ENCODE measurements at regions of chr5 and their contacts with region 1.

Region 1: GRCh38 chr5:160439205-160439600 is 17.5 kb downstream of the PTTG1 start:
- DNase-seq: peak; percentile 82 to 87 (median 84)
- H3K4me3 ChIP-seq: peak overlapping the region; percentile 48 to 85
- H3K4me3 Mint-ChIP-seq: peak overlapping the region; percentile 87 to 99 (median 91)
- H3K27ac ChIP-seq: peak overlapping the region; percentile 33
- H3K27ac Mint-ChIP-seq: peak overlapping the region; percentile 84 to 97 (median 89)
- H3K4me1 ChIP-seq: peaks cover 10% of the 10 kb centered on the region
- H3K4me1 Mint-ChIP-seq: peaks cover 7 to 23% (median 12%) of the 10 kb centered on the region in 4 donors
- H3K27me3 ChIP-seq: no peaks in the 10 kb centered on the region
- H3K27me3 Mint-ChIP-seq: peaks cover 7% of the 10 kb centered on the region in 2 donors

Region 2: DNA sequence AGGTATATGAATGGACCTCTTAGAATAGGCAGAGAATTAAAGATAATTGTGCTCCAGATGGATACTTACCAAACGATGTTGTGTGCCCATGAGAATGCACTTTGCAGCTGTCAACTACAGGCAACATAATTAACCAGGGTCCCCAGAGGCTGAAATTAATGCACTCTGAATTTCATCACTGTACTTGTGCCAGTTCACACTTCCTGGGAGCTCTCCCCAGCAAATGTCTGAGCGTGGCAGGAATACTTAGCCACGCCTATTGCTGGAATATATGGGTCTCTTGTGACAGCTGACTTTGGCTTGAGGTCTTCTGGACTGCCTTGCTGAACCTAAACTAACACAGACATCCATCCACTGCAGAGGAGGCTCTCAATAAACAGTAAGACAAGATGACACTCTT is 56.9 kb before region 1 on chr5:
- CTCF ChIA-PET with region 1: no interaction called
- POLR2A ChIA-PET with region 1: no interaction called
- intact Hi-C with region 1: no loop called
- DNase-seq: no peak
- H3K4me3 ChIP-seq: no peak overlapping the region
- H3K4me3 Mint-ChIP-seq: no peak overlapping the region
- H3K27ac ChIP-seq: no peak overlapping the region
- H3K27ac Mint-ChIP-seq: no peak overlapping the region
- H3K4me1 ChIP-seq: no peaks in the 10 kb centered on the region
- H3K4me1 Mint-ChIP-seq: no peaks in the 10 kb centered on the region
- H3K27me3 ChIP-seq: no peaks in the 10 kb centered on the region
- H3K27me3 Mint-ChIP-seq: peaks cover 7 to 12% of the 10 kb centered on the region in 2 donors

Region 3: GRCh38 chr5:160418561-160419457 is 20.4 kb before region 1 on chr5 and contains the start of gene SLU7:
- CTCF ChIA-PET with region 1: interaction called, 239 read pairs
- POLR2A ChIA-PET with region 1: interaction called, 32 read pairs
- intact Hi-C with region 1: loop called (anchors 1 kb)
- DNase-seq: peak; percentile 91 to 92 (median 92)
- H3K4me3 ChIP-seq: peak within 1 kb of the TSS; percentile 80 to 85
- H3K4me3 Mint-ChIP-seq: peak within 1 kb of the TSS; percentile 93 to 100 (median 96)
- H3K27ac ChIP-seq: peak within 1 kb of the TSS; percentile 98
- H3K27ac Mint-ChIP-seq: peak within 1 kb of the TSS; percentile 96 to 99 (median 98)
- H3K4me1 ChIP-seq: peaks cover 61% of the 10 kb centered on the region
- H3K4me1 Mint-ChIP-seq: peaks cover 46 to 84% (median 61%) of the 10 kb centered on the region in 4 donors
- H3K27me3 ChIP-seq: no peaks in the 10 kb centered on the region
- H3K27me3 Mint-ChIP-seq: no peaks in the 10 kb centered on the region
- total RNA-seq, gene SLU7: 86.8 to 93.9 TPM

Region 4: DNA sequence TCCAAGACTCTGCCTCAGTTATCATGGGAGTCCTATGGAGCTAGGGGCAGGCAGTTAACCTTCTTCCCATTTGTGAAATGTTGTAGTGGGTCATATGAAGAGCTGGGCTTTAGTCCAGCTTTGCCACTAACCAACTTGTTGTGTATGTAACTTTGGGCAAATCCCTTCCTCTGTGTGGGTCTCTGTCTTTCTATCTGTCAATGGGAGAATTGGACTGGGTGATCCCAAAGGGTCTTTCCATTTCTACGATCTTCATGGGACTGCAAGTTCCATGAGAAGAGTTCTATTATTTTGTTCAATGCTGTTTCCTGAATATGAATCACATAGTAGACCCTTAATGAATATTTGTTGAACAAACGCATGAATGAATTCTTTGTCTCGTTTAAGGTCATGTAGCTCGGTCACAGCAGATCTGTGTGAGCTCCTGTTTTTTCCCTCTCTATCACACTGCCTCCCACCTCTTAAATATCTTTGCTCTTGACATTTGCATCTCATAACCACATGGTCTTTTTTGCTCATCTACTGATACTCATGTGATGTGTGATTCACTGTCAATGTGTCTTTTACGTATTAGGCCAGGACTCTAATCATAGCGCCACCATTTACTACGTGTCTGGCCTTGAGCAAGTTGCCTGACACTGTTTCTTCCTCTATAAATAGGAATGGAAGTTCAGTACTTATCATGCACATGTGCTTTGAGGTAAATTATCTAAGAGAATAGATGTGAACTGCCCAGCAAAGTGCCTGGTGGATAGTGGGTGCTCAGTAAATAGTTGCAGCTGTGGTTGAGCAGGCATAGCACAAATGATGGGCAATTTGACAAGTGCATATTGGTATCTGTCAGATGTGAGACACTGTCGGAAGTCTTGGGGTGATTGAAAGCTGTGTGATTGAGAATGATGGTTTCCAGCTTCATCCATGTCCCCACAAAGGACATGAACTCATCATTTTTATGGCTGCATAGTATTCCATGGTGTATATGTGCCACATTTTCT is 19.9 kb after region 1 on chr5:
- CTCF ChIA-PET with region 1: interaction called, 78 read pairs
- POLR2A ChIA-PET with region 1: interaction called, 3 read pairs
- intact Hi-C with region 1: loop called (anchors 1 kb)
- DNase-seq: no peak
- H3K4me3 ChIP-seq: no peak overlapping the region
- H3K4me3 Mint-ChIP-seq: no peak overlapping the region
- H3K27ac ChIP-seq: no peak overlapping the region
- H3K27ac Mint-ChIP-seq: peak overlapping the region in 1 of 7 donors; percentile 7
- H3K4me1 ChIP-seq: peaks cover 2% of the 10 kb centered on the region
- H3K4me1 Mint-ChIP-seq: peaks cover 0 to 3% (median 3%) of the 10 kb centered on the region in 4 donors
- H3K27me3 ChIP-seq: no peaks in the 10 kb centered on the region
- H3K27me3 Mint-ChIP-seq: peaks cover 0 to 2% of the 10 kb centered on the region in 2 donors

Region 5: DNA sequence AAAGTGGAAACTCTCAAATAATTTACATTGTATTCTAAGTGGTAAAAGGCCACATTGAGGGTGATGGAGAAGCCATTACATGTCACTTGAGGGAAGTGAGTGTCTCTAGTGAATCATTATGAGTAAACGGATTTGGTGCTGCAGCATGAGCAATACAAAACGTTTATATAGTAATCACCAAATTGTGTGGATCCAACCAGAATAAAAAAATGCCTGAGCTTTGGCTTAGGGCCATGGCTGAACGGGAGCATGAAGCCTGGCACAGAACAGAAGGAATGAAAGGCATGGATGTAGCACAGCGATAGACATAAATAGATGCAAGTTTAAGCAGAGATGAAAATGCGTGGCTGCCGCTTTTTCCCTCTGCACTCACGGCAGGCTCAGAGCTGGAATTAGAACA is 40.7 kb after region 1 on chr5:
- CTCF ChIA-PET with region 1: interaction called, 32 read pairs
- POLR2A ChIA-PET with region 1: interaction called, 8 read pairs
- intact Hi-C with region 1: no loop called
- DNase-seq: no peak
- H3K4me3 ChIP-seq: no peak overlapping the region
- H3K4me3 Mint-ChIP-seq: peak overlapping the region in 3 of 8 donors; percentile 10 to 81 (median 29)
- H3K27ac ChIP-seq: peak overlapping the region; percentile 1
- H3K27ac Mint-ChIP-seq: peak overlapping the region in 4 of 7 donors; percentile 36 to 94 (median 60)
- H3K4me1 ChIP-seq: peaks cover 71% of the 10 kb centered on the region
- H3K4me1 Mint-ChIP-seq: peaks cover 37 to 85% (median 55%) of the 10 kb centered on the region in 4 donors
- H3K27me3 ChIP-seq: no peaks in the 10 kb centered on the region
- H3K27me3 Mint-ChIP-seq: no peaks in the 10 kb centered on the region

Region 6: GRCh38 chr5:160508780-160509361 is 69.7 kb after region 1 on chr5:
- CTCF ChIA-PET with region 1: interaction called, 192 read pairs
- POLR2A ChIA-PET with region 1: interaction called, 14 read pairs
- intact Hi-C with region 1: loop called (anchors 1 kb)
- DNase-seq: peak; percentile 76 to 83 (median 79)
- H3K4me3 ChIP-seq: no peak overlapping the region
- H3K4me3 Mint-ChIP-seq: peak overlapping the region in 3 of 8 donors; percentile 20 to 51 (median 40)
- H3K27ac ChIP-seq: no peak overlapping the region
- H3K27ac Mint-ChIP-seq: peak overlapping the region; percentile 2 to 89 (median 76)
- H3K4me1 ChIP-seq: peaks cover 35% of the 10 kb centered on the region
- H3K4me1 Mint-ChIP-seq: peaks cover 25 to 35% (median 26%) of the 10 kb centered on the region in 4 donors
- H3K27me3 ChIP-seq: no peaks in the 10 kb centered on the region
- H3K27me3 Mint-ChIP-seq: no peaks in the 10 kb centered on the region

Region 7: DNA sequence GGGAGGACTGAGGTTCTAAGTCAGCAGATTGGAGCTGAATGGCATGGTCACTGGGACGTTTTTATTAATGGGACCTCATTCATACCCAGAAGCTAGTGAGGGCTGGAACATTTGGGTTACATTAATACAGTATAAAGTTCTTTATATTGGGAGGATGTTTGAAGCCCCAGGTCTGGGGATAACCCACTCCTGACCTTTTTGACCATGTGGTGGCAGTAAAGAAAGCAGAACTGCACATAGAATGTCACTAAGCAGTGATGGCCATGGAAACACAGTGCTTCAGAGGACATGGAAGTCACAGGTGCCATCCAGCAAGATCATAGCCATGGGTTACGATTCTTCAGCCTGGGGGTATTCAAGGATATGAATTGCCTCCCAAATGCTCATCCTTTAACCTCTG is 236.8 kb after region 1 on chr5:
- CTCF ChIA-PET with region 1: no interaction called
- POLR2A ChIA-PET with region 1: no interaction called
- intact Hi-C with region 1: loop called (anchors 10 kb)
- DNase-seq: no peak
- H3K4me3 ChIP-seq: no peak overlapping the region
- H3K4me3 Mint-ChIP-seq: no peak overlapping the region
- H3K27ac ChIP-seq: no peak overlapping the region
- H3K27ac Mint-ChIP-seq: no peak overlapping the region
- H3K4me1 ChIP-seq: no peaks in the 10 kb centered on the region
- H3K4me1 Mint-ChIP-seq: no peaks in the 10 kb centered on the region
- H3K27me3 ChIP-seq: no peaks in the 10 kb centered on the region
- H3K27me3 Mint-ChIP-seq: peaks cover 2 to 5% of the 10 kb centered on the region in 2 donors

Region 8: GRCh38 chr5:161544350-161544765 is 1105.2 kb after region 1 on chr5:
- CTCF ChIA-PET with region 1: no interaction called
- POLR2A ChIA-PET with region 1: no interaction called
- intact Hi-C with region 1: loop called (anchors 10 kb)
- DNase-seq: no peak
- H3K4me3 ChIP-seq: no peak overlapping the region
- H3K4me3 Mint-ChIP-seq: peak overlapping the region in 1 of 8 donors; percentile 39
- H3K27ac ChIP-seq: no peak overlapping the region
- H3K27ac Mint-ChIP-seq: no peak overlapping the region
- H3K4me1 ChIP-seq: peaks cover 4% of the 10 kb centered on the region
- H3K4me1 Mint-ChIP-seq: peaks cover 0 to 15% (median 7%) of the 10 kb centered on the region in 4 donors
- H3K27me3 ChIP-seq: peaks cover 16% of the 10 kb centered on the region
- H3K27me3 Mint-ChIP-seq: peaks cover 25 to 33% of the 10 kb centered on the region in 2 donors

Measured in CD4-positive, alpha-beta memory T cell (primary cell).